ENCODE measurements at regions of chr5 and their contacts with region 1.

Region 1: DNA sequence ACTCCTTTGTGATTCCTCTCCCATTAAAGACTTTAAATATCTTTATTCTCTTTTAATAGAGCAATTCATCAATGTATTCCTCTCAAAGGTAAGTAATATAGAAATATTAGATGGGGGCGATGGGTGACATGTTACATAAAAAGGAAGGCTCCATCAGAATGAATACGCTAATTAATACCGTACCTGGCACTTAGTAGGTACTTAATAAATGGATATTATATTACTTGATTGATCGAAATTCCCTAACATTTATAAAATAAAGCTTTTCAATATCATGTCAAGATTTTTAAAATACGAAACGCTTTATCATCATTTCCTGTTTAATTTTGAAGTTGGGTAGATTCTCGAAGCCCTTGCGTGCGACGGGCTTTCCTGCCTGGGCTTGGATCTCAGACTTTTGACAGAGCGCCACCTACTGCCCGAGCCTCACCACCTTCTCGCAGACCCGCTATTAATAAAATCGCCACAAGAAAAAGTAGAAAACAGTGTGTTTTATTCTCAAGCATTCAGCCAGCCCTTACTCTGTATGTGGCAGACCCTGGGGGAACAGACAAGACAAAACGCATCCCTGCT is 99.4 kb downstream of the C5orf15 start:
- DNase-seq: peak; percentile 86
- ATAC-seq: peak; percentile 92
- H3K4me3 ChIP-seq: no peak overlapping the region
- H3K4me3 Mint-ChIP-seq: no peak overlapping the region
- H3K27ac ChIP-seq: no peak overlapping the region
- H3K27ac Mint-ChIP-seq: peak overlapping the region; percentile 12
- H3K4me1 ChIP-seq: peaks cover 24 to 37% of the 10 kb centered on the region in 2 donors
- H3K4me1 Mint-ChIP-seq: peaks cover 15% of the 10 kb centered on the region
- H3K27me3 ChIP-seq: no peaks in the 10 kb centered on the region
- H3K27me3 Mint-ChIP-seq: no peaks in the 10 kb centered on the region
- CTCF ChIP-seq: peak; percentile 90

Region 2: DNA sequence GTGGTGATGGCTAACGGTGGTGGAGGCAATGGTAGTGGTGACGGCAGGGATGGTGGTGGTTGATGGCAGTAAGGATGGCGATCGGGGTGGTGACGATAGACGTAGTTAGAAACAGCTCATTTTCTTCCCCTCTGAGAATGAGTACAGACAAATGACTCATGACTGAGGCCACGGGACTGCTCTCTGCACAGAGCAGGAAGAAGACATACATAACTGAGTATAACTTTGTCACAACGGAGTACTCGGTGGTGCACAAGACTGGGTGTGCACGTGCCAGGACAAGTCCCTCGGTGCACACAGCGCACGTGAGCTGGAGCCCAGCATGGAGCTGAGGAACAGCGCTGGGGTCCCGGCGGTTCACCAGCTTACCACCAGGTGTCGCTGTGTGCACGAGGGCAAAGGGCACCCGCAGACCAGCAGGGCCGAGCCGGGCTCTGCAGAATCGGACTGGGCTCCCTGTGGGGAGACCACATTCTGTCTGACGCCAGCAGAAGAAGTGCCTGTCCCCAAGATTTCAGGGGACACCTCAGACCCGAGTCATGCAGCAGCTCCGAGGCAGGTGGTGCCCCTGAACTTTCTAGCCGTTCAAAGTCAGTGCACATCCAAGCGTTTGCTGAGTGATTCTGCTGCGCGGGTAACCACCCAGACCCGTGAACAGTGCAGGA is 445.3 kb before region 1 on chr5:
- CTCF ChIA-PET with region 1: interaction called, 33 read pairs
- POLR2A ChIA-PET with region 1: no interaction called
- intact Hi-C with region 1: loop called (anchors 1 kb)
- DNase-seq: peak; percentile 80
- ATAC-seq: peak; percentile 79
- H3K4me3 ChIP-seq: no peak overlapping the region
- H3K4me3 Mint-ChIP-seq: no peak overlapping the region
- H3K27ac ChIP-seq: no peak overlapping the region
- H3K27ac Mint-ChIP-seq: no peak overlapping the region
- H3K4me1 ChIP-seq: peaks cover 0 to 13% of the 10 kb centered on the region in 2 donors
- H3K4me1 Mint-ChIP-seq: peaks cover 7% of the 10 kb centered on the region
- H3K27me3 ChIP-seq: no peaks in the 10 kb centered on the region
- H3K27me3 Mint-ChIP-seq: peaks cover 28% of the 10 kb centered on the region
- CTCF ChIP-seq: peak; percentile 98

Region 3: GRCh38 chr5:133552931-133553525 is 316.0 kb before region 1 on chr5:
- CTCF ChIA-PET with region 1: interaction called, 9 read pairs
- POLR2A ChIA-PET with region 1: no interaction called
- intact Hi-C with region 1: loop called (anchors 2 kb)
- DNase-seq: peak; percentile 76
- ATAC-seq: peak; percentile 67
- H3K4me3 ChIP-seq: no peak overlapping the region
- H3K4me3 Mint-ChIP-seq: no peak overlapping the region
- H3K27ac ChIP-seq: no peak overlapping the region
- H3K27ac Mint-ChIP-seq: no peak overlapping the region
- H3K4me1 ChIP-seq: no peaks in the 10 kb centered on the region
- H3K4me1 Mint-ChIP-seq: peaks cover 3% of the 10 kb centered on the region
- H3K27me3 ChIP-seq: peaks cover 0 to 6% (median 6%) of the 10 kb centered on the region in 4 experiments
- H3K27me3 Mint-ChIP-seq: peaks cover 57% of the 10 kb centered on the region
- CTCF ChIP-seq: peak; percentile 89

Region 4: DNA sequence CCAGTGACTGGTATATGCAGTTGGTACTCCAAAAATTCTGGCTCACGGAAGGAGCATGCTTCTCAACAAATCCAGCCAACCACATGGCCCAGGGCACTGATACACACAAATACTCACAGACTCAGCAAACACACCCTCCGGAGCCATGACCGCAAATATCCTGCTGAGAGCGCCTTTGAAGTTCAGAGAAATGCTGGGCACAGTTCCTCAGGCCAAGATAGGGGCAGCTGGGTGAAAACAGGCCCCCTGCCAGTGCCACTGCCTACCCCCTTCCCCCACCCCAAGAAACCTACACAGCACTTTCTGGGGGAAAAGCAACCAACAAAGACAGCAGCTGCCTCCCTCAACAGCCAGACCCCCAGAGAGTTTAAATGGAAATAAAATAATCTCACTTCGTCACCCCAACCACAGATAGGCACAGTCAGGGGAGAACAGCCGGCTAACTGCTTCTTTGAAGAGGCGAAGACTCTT is 20.7 kb before region 1 on chr5:
- CTCF ChIA-PET with region 1: interaction called, 16 read pairs
- POLR2A ChIA-PET with region 1: no interaction called
- intact Hi-C with region 1: no loop called
- DNase-seq: no peak
- ATAC-seq: no peak
- H3K4me3 ChIP-seq: no peak overlapping the region
- H3K4me3 Mint-ChIP-seq: peak overlapping the region; percentile 61
- H3K27ac ChIP-seq: no peak overlapping the region
- H3K27ac Mint-ChIP-seq: no peak overlapping the region
- H3K4me1 ChIP-seq: peaks cover 43 to 45% of the 10 kb centered on the region in 2 donors
- H3K4me1 Mint-ChIP-seq: peaks cover 33% of the 10 kb centered on the region
- H3K27me3 ChIP-seq: no peaks in the 10 kb centered on the region
- H3K27me3 Mint-ChIP-seq: no peaks in the 10 kb centered on the region
- CTCF ChIP-seq: no peak

Region 5: GRCh38 chr5:133895979-133896845 is 27.2 kb after region 1 on chr5:
- CTCF ChIA-PET with region 1: interaction called, 10 read pairs
- POLR2A ChIA-PET with region 1: no interaction called
- intact Hi-C with region 1: no loop called
- DNase-seq: no peak
- ATAC-seq: no peak
- H3K4me3 ChIP-seq: no peak overlapping the region
- H3K4me3 Mint-ChIP-seq: no peak overlapping the region
- H3K27ac ChIP-seq: no peak overlapping the region
- H3K27ac Mint-ChIP-seq: no peak overlapping the region
- H3K4me1 ChIP-seq: peaks cover 32 to 36% of the 10 kb centered on the region in 2 donors
- H3K4me1 Mint-ChIP-seq: peaks cover 31% of the 10 kb centered on the region
- H3K27me3 ChIP-seq: no peaks in the 10 kb centered on the region
- H3K27me3 Mint-ChIP-seq: no peaks in the 10 kb centered on the region
- CTCF ChIP-seq: no peak

Region 6: DNA sequence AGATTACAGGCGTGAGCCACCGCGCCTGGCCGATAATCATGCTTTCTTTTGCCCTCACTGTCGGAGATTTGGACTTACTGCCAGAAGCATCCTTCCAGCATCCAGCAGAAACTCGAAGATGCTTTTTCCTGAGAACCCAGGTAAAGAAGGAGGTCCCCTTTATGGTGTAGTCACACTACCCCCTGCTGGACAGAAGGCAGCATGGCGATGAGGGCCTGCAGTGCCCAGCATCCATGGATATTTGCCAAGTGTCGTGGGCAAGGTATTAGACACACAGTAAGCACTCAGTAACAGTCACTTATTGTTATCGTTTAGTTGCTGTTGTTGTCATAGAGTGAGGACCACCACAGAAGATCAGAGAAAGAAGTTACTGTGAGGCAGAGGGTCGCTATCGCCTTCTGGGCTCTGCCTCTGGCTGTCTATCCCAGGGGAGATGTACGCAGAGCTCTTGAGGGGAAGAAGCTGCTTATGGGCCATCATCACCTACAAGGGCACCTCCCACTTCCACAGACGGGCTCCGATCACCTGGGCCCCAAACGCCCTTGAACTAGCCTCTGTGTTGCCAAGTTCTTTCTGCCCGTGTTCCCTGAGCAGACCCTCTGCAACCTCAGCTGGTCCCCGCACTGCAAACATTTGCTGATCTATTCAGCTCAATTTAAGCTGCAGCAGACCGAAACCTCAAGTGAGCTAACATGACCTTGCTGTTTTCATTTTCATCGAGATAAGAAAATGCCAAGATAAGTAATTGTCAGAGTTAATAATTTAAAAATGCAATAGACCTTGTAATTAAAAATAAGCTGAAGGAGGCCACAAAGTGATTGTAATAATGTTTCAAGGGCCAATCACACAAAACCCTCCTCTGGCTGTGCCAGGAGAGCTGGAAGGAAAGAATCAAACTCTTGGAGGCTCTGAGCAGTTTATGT is 75.5 kb after region 1 on chr5:
- CTCF ChIA-PET with region 1: interaction called, 20 read pairs
- POLR2A ChIA-PET with region 1: no interaction called
- intact Hi-C with region 1: loop called (anchors 1 kb)
- DNase-seq: peak; percentile 77
- ATAC-seq: peak; percentile 88
- H3K4me3 ChIP-seq: no peak overlapping the region
- H3K4me3 Mint-ChIP-seq: no peak overlapping the region
- H3K27ac ChIP-seq: no peak overlapping the region
- H3K27ac Mint-ChIP-seq: no peak overlapping the region
- H3K4me1 ChIP-seq: peaks cover 31 to 47% of the 10 kb centered on the region in 2 donors
- H3K4me1 Mint-ChIP-seq: peaks cover 36% of the 10 kb centered on the region
- H3K27me3 ChIP-seq: no peaks in the 10 kb centered on the region
- H3K27me3 Mint-ChIP-seq: no peaks in the 10 kb centered on the region
- CTCF ChIP-seq: peak; percentile 88

Region 7: GRCh38 chr5:134113902-134114875 is 245.2 kb after region 1 on chr5 and contains the start of gene TCF7:
- CTCF ChIA-PET with region 1: no interaction called
- POLR2A ChIA-PET with region 1: no interaction called
- intact Hi-C with region 1: no loop called
- DNase-seq: peak; percentile 86
- ATAC-seq: peak; percentile 89
- H3K4me3 ChIP-seq: peak within 1 kb of the TSS; percentile 64 to 84 (median 82)
- H3K4me3 Mint-ChIP-seq: peak within 1 kb of the TSS; percentile 90
- H3K27ac ChIP-seq: peak within 1 kb of the TSS in 1 of 2 donors; percentile 36
- H3K27ac Mint-ChIP-seq: peak within 1 kb of the TSS; percentile 78
- H3K4me1 ChIP-seq: peaks cover 13 to 32% of the 10 kb centered on the region in 2 donors
- H3K4me1 Mint-ChIP-seq: peaks cover 19% of the 10 kb centered on the region
- H3K27me3 ChIP-seq: peaks cover 0 to 38% (median 16%) of the 10 kb centered on the region in 4 experiments
- H3K27me3 Mint-ChIP-seq: peaks cover 14% of the 10 kb centered on the region
- CTCF ChIP-seq: no peak
- total RNA-seq, gene TCF7: 58.8 and 61.1 TPM in 2 replicates

Measured in B cell (primary cell).